ENCODE measurements at regions of chr2 and their contacts with region 1.

Region 1: DNA sequence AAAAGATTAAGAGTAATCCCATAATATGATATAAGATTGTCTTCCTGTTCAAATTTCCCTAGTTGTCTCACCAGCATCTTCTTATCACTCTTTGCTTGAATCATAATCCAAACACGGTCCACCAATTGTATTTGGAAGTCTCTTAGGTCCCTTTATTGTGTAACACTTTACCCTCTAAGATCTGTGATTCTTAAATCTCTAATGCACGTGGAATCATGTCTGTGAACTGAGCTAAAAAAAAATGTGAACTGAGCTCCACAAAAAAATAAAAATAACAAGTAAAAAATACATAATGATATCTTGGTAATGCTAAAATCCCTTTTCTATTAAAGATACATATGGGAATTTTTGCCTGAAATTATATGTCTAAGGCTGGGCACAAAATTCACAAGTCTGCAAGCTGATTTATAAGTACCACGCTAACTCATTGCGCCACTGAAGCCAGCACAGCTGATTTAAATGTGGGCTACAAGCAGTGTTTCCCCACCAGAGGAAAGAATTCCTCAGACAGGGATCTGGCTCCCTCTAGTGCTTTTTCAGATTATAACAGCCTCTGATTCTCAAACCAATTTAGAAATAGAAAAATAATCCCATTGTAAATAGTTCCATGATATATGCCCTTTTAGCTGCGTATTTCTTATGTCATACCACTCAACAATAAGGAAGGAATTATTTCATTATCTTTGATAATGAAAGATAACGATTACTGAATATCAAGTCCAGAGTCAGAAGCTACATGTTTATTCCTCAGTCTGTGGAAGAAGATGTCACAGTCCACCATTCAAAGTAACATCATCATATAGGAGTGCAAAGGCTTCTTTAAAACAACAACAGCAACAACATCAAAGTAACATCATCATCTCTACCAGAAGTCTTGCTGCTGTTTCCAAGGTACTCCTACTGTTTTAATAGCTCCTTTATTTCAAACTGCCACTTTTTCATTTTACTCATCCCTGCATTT is 22.9 kb downstream of the RBM43 start:
- DNase-seq: peak; percentile 46
- H3K4me3 ChIP-seq: no peak overlapping the region
- CTCF ChIP-seq: peak; percentile 55

Region 2: DNA sequence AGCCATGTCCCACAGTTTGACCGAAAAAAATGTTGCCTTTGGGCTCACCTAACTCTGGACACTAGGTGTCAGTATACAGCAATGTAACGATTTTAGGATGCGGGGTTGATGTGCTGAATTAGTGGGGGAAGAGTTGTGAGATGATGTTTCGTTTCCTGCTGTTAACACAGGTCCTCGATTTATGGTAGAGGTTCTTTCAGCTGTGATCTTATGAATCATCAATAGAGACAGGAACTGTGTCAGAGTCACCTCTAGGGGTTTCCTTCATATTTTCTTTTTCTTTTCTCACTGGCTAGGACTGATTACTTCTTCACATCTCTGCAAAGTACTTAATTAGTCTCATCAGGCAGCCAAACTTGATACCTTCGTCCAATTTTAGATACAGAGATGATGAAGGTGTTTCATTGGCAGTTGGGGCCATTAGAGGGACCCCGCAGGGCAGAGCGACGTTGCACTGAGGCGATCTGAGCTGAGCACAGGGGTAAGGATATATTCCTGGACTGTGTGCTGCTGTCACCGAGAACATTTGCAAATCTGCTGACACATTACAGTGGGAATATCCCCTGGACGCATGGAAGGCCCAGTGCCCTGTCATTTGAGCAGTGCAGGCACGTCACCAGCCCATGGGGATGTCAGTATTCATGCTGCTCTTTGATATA is 1641.0 kb before region 1 on chr2:
- CTCF ChIA-PET with region 1: interaction called, 57 read pairs
- POLR2A ChIA-PET with region 1: no interaction called
- DNase-seq: no peak
- H3K4me3 ChIP-seq: peak overlapping the region; percentile 26
- CTCF ChIP-seq: peak; percentile 68

Region 3: GRCh38 chr2:150391779-150392178 is 847.0 kb before region 1 on chr2:
- CTCF ChIA-PET with region 1: no interaction called
- POLR2A ChIA-PET with region 1: no interaction called
- DNase-seq: no peak
- H3K4me3 ChIP-seq: no peak overlapping the region
- CTCF ChIP-seq: no peak

Region 4: GRCh38 chr2:150478200-150478974 is 760.4 kb before region 1 on chr2:
- CTCF ChIA-PET with region 1: interaction called, 14 read pairs
- POLR2A ChIA-PET with region 1: no interaction called
- DNase-seq: no peak
- H3K4me3 ChIP-seq: peak overlapping the region; percentile 31
- CTCF ChIP-seq: no peak

Region 5: DNA sequence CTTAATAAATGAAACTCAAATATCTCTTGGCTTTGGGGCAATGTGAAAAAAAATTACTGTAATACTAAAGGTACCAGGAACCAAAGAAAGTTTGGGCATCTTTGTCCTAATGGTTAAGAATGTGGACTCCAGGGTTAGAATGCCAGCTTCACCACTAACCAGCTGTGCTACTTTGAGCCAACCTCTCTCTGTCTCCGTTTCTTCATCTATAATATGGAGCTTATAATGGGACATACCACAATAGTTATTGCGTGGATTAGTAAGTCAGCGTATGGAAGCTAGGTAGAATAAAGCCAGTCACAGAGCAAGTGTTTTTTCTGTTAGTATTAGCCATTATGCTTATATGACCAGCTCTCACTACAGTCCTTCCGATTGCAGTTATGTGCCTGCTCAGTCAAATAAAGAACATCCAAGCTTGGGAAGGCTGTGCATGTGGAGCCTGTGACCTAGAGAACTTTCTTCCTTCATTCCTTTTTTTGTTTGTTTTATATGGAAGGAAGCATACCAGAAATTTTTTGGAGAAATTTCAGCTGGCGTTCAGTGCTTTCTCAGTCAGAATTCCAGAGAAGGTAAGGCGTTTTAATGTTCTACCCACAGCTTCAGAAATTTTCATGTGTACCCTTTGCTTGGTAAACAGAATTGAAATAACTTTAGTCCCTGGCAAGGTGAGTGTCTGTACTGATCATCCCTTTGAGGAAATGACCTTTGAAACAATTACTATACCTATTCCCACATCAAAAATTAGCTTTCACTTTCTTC is 637.3 kb before region 1 on chr2:
- CTCF ChIA-PET with region 1: interaction called, 13 read pairs
- POLR2A ChIA-PET with region 1: no interaction called
- DNase-seq: no peak
- H3K4me3 ChIP-seq: no peak overlapping the region
- CTCF ChIP-seq: no peak

Region 6: GRCh38 chr2:151051574-151052220 is 187.1 kb before region 1 on chr2:
- CTCF ChIA-PET with region 1: interaction called, 11 read pairs
- POLR2A ChIA-PET with region 1: no interaction called
- DNase-seq: no peak
- H3K4me3 ChIP-seq: no peak overlapping the region
- CTCF ChIP-seq: peak; percentile 72

Region 7: GRCh38 chr2:151251012-151251411 is 12.2 kb after region 1 on chr2:
- CTCF ChIA-PET with region 1: interaction called, 21 read pairs
- POLR2A ChIA-PET with region 1: no interaction called
- DNase-seq: peak; percentile 78
- H3K4me3 ChIP-seq: no peak overlapping the region
- CTCF ChIP-seq: no peak

Region 8: DNA sequence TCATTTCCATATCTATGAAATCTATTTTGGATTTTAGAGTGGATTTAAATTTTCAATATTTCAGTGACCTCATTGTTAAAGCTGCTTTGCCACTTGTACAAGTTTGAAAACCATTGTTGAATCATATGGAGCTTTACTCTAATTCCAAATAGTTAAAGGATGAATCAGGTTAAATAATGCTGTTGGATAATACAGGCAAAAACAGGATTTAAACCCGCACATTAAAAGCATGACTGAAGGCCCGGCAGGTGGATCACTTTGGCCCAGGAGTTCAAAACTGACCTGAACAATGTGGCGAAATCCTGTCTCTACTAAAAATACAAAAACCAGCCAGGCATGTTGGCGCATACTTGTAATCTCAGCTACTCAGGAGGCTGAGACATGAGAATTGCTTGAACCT is 239.2 kb after region 1 on chr2:
- CTCF ChIA-PET with region 1: no interaction called
- POLR2A ChIA-PET with region 1: no interaction called
- DNase-seq: peak; percentile 16
- H3K4me3 ChIP-seq: no peak overlapping the region
- CTCF ChIP-seq: no peak

Measured in AG04449 (cell line).